ENCODE measurements at regions of chr18 and their contacts with region 1.

Region 1: GRCh38 chr18:58125183-58125582 is 81.2 kb downstream of the NEDD4L start:
- DNase-seq: no peak
- ATAC-seq: no peak
- H3K4me3 Mint-ChIP-seq: no peak overlapping the region
- H3K27ac Mint-ChIP-seq: no peak overlapping the region
- H3K4me1 Mint-ChIP-seq: peaks cover 25% of the 10 kb centered on the region
- H3K27me3 Mint-ChIP-seq: peaks cover 10% of the 10 kb centered on the region

Region 2: GRCh38 chr18:58135701-58136331 is 10.6 kb after region 1 on chr18:
- CTCF ChIA-PET with region 1: interaction called, 12 read pairs
- POLR2A ChIA-PET with region 1: no interaction called
- DNase-seq: peak; percentile 68
- ATAC-seq: peak; percentile 86
- H3K4me3 Mint-ChIP-seq: no peak overlapping the region
- H3K27ac Mint-ChIP-seq: no peak overlapping the region
- H3K4me1 Mint-ChIP-seq: peaks cover 20% of the 10 kb centered on the region
- H3K27me3 Mint-ChIP-seq: peaks cover 14% of the 10 kb centered on the region